GM13977 (cell line): ENCODE measurements at regions of chr11 and their contacts with region 1.

Region 1: DNA sequence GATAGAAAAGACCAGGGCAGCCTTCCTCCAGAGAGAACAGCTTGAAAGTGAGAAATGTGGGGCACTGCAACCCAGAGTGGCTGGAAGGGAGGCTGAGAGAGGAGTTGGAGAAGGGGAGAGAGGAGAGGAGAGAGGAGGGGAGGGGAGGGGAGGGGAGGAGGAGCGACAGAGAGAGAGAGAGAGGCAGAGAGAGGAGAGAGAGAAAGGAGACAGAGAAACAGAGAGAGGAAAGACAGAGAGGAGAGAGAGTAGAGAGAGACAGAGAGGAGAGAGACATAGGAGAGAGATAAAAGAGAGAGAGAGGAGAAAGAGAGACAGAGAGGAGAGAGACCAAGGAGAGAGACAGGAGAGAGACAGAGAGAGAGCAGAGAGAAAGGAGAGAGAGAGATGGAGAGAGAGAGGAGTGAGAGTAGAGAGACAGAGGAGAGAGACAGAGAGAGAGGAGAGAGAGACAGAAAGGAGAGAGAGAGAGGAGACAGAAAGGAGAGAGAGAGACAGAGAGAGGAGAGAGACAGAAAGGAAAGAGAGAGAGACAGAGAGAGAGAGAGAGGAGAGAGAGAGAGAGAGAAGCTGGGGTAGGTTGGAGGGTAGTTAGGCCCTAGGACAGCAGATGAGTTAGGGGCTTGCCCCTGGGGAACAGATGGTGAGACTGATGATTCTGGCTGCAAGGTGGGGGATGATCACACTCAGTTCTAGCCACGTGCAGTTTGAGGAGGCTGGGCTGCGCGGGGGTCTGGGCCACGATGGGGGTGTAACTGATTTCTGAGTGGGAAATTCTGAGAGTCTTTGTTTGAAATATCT is 8.5 kb upstream of the SCYL1 start:
- DNase-seq: no peak
- CTCF ChIP-seq: no peak

Region 2: DNA sequence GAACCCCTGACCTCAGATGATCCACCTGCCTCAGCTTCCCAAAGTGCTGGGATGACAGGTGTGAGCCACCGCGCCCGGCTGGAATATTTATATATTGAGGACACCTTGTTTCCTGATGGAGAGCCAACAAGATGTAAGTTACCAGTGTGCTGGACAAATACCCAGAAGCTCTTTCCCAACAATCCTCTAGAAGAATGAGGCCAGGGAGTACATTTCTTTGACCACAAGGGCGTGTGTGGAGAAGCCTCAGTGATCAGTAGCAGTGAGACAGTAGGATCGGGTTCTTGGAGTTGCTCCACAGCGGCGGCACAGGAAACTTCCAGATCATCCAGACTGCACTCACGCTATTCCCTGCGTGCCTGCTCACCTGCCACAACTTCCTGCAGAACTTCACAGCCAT is 264.9 kb before region 1 on chr11:
- in situ Hi-C with region 1: no loop called
- DNase-seq: no peak
- CTCF ChIP-seq: no peak

Region 3: GRCh38 chr11:65274735-65275682 is 241.3 kb before region 1 on chr11:
- in situ Hi-C with region 1: loop called (anchors 10 kb)
- DNase-seq: peak; percentile 38
- CTCF ChIP-seq: peak; percentile 82

Region 4: GRCh38 chr11:65366340-65366773 is 150.0 kb before region 1 on chr11:
- in situ Hi-C with region 1: loop called (anchors 5 kb)
- DNase-seq: peak; percentile 82
- CTCF ChIP-seq: peak; percentile 76

Region 5: DNA sequence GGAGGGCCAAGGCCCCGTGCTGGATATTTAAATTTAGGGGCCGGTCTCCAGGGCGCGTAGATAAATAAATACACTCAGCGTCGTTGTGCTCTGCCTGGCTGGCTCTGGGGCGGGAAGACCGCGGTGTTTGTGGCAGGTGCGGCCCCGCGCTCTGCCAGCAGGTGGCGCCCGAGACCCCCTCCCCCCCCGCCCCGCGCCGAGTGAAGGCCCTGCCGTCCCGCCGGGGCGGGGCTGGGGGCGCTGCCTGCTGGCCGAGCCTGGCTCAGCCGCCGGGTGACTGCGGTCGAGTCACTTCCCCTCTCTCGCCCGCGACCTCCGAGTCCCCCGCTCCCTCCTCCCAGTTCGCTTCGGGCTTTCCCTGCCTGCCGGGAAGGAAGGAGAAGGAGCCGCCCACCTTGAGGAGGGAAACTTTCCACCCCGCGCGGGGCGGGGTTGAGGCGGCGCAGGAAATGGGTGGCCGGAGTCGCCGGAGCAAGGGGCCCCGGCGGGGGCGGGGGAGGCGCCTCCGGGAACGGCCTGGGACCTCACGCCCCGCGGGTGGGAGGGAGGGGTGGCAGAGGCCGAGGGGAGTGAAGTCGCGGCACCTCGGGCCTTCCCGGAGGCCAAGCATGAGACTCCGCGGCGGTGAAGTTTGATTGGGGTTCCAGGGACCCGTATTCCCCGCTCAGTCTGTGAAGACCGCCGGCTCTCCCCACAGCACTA is 57.9 kb after region 1 on chr11:
- in situ Hi-C with region 1: no loop called
- DNase-seq: peak; percentile 98
- CTCF ChIP-seq: peak; percentile 84